ENCODE measurements at regions of chr3 and their contacts with region 1.

Region 1: GRCh38 chr3:17412950-17413530 is 329.4 kb downstream of the TBC1D5 start:
- DNase-seq: peak; percentile 67
- ATAC-seq: no peak
- H3K4me3 ChIP-seq: no peak overlapping the region
- H3K4me3 Mint-ChIP-seq: no peak overlapping the region
- H3K27ac ChIP-seq: no peak overlapping the region
- H3K27ac Mint-ChIP-seq: no peak overlapping the region
- H3K4me1 ChIP-seq: no peaks in the 10 kb centered on the region
- H3K4me1 Mint-ChIP-seq: no peaks in the 10 kb centered on the region
- H3K27me3 ChIP-seq: no peaks in the 10 kb centered on the region
- H3K27me3 Mint-ChIP-seq: no peaks in the 10 kb centered on the region
- CTCF ChIP-seq: peak; percentile 83

Region 2: GRCh38 chr3:17258823-17259436 is 154.1 kb before region 1 on chr3:
- CTCF ChIA-PET with region 1: interaction called, 21 read pairs
- POLR2A ChIA-PET with region 1: no interaction called
- intact Hi-C with region 1: loop called (anchors 1 kb)
- DNase-seq: peak; percentile 61
- ATAC-seq: no peak
- H3K4me3 ChIP-seq: no peak overlapping the region
- H3K4me3 Mint-ChIP-seq: no peak overlapping the region
- H3K27ac ChIP-seq: no peak overlapping the region
- H3K27ac Mint-ChIP-seq: no peak overlapping the region
- H3K4me1 ChIP-seq: no peaks in the 10 kb centered on the region
- H3K4me1 Mint-ChIP-seq: peaks cover 1% of the 10 kb centered on the region
- H3K27me3 ChIP-seq: no peaks in the 10 kb centered on the region
- H3K27me3 Mint-ChIP-seq: no peaks in the 10 kb centered on the region
- CTCF ChIP-seq: peak; percentile 96

Region 3: GRCh38 chr3:17398959-17399551 is 14.0 kb before region 1 on chr3:
- CTCF ChIA-PET with region 1: interaction called, 13 read pairs
- POLR2A ChIA-PET with region 1: no interaction called
- intact Hi-C with region 1: no loop called
- DNase-seq: peak; percentile 62
- ATAC-seq: peak; percentile 76
- H3K4me3 ChIP-seq: no peak overlapping the region
- H3K4me3 Mint-ChIP-seq: no peak overlapping the region
- H3K27ac ChIP-seq: peak overlapping the region; percentile 39 to 74
- H3K27ac Mint-ChIP-seq: no peak overlapping the region
- H3K4me1 ChIP-seq: peaks cover 26 to 28% of the 10 kb centered on the region in 2 donors
- H3K4me1 Mint-ChIP-seq: peaks cover 35% of the 10 kb centered on the region
- H3K27me3 ChIP-seq: no peaks in the 10 kb centered on the region
- H3K27me3 Mint-ChIP-seq: no peaks in the 10 kb centered on the region
- CTCF ChIP-seq: no peak

Region 4: GRCh38 chr3:17423786-17424536 is 10.9 kb after region 1 on chr3:
- CTCF ChIA-PET with region 1: interaction called, 12 read pairs
- POLR2A ChIA-PET with region 1: no interaction called
- intact Hi-C with region 1: no loop called
- DNase-seq: no peak
- ATAC-seq: no peak
- H3K4me3 ChIP-seq: no peak overlapping the region
- H3K4me3 Mint-ChIP-seq: no peak overlapping the region
- H3K27ac ChIP-seq: no peak overlapping the region
- H3K27ac Mint-ChIP-seq: no peak overlapping the region
- H3K4me1 ChIP-seq: no peaks in the 10 kb centered on the region
- H3K4me1 Mint-ChIP-seq: no peaks in the 10 kb centered on the region
- H3K27me3 ChIP-seq: no peaks in the 10 kb centered on the region
- H3K27me3 Mint-ChIP-seq: no peaks in the 10 kb centered on the region
- CTCF ChIP-seq: no peak

Region 5: GRCh38 chr3:17431004-17431403 is 18.0 kb after region 1 on chr3:
- CTCF ChIA-PET with region 1: interaction called, 12 read pairs
- POLR2A ChIA-PET with region 1: no interaction called
- intact Hi-C with region 1: no loop called
- DNase-seq: peak; percentile 14
- ATAC-seq: no peak
- H3K4me3 ChIP-seq: no peak overlapping the region
- H3K4me3 Mint-ChIP-seq: no peak overlapping the region
- H3K27ac ChIP-seq: no peak overlapping the region
- H3K27ac Mint-ChIP-seq: no peak overlapping the region
- H3K4me1 ChIP-seq: no peaks in the 10 kb centered on the region
- H3K4me1 Mint-ChIP-seq: no peaks in the 10 kb centered on the region
- H3K27me3 ChIP-seq: no peaks in the 10 kb centered on the region
- H3K27me3 Mint-ChIP-seq: no peaks in the 10 kb centered on the region
- CTCF ChIP-seq: peak; percentile 67

Measured in B cell (primary cell).